HEK293 (cell line): ENCODE measurements at regions of chr19 and their contacts with region 1.

Region 1: DNA sequence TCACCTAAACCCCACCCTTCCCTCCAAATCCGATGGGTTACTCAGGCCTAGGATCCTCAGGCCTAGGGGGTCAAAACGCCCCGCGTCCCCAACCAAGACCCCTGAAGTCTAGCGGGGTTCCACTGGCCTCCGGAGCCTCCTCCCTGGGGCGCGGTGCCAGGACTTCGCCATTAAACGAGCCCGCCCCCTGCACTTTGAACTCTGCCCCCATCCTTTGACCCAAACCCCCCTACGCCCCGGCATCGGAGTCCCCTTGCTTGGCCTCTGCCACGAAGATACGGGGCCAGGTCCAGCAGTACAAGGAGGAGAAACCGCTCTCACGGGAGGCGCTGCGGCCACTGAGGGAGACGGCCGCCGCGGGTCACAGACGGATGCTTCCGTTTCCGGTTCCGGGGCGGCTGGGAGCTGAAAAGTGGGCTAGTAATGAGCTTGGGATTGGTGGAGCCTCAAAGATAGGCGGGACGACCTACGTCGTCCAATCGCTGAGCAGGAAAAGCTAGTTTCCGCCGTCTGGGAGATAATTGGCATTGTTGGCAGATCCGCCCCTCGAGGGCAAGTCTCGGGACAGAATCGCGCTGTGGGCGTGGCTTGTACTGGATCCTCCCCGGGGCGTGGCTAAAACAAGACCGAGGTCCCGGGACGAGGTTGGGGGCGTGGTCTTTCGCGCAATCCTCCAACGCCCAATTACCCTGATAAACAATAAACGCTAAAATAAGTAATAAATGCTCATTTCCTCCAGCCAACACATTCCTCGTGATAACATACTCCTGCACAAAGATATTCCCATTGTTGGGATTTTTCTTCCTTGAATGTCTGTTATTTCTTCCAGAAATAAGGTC is 5.7 kb upstream of the ZNF77 start:
- H3K4me3 ChIP-seq: peak overlapping the region; percentile 82
- H3K27ac ChIP-seq: peak overlapping the region; percentile 70
- H3K4me1 ChIP-seq: peaks cover 4% of the 10 kb centered on the region; the same call in 1 of the 2 replicates
- CTCF ChIP-seq: 0 out of 2 replicates have a peak, but pooled peaks have one; percentile 41

Region 2: DNA sequence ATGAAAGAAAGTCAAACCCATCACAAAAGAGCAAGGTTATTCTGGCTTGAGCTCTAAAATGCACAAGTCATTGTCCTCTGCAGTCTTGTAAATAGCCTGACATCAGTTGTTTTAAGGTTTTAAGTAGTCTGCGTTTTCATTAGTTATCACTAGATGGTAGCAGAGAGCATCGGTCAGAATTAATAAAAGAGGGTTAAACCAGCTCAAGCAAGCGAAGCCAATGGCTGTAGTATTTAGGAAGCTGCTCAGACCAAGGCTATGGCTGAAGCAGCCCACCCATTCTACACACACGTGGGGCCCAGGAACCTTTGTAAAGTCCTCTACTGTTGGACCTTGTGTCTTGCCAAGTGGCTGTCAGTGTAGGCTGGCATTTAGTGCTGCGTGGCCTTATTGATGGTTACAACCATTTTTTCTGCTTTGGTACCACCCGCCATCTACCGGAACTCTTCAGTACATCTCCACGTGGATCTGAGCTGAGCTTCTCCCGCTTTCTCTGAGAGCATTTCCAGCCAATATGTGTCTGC is 63.1 kb before region 1 on chr19:
- CTCF ChIA-PET with region 1: interaction called, 13 read pairs
- POLR2A ChIA-PET with region 1: interaction called, 7 read pairs
- H3K4me3 ChIP-seq: no peak overlapping the region
- H3K27ac ChIP-seq: no peak overlapping the region
- H3K4me1 ChIP-seq: no peaks in the 10 kb centered on the region
- CTCF ChIP-seq: peak; percentile 46; the same call in 1 of the 2 replicates

Region 3: DNA sequence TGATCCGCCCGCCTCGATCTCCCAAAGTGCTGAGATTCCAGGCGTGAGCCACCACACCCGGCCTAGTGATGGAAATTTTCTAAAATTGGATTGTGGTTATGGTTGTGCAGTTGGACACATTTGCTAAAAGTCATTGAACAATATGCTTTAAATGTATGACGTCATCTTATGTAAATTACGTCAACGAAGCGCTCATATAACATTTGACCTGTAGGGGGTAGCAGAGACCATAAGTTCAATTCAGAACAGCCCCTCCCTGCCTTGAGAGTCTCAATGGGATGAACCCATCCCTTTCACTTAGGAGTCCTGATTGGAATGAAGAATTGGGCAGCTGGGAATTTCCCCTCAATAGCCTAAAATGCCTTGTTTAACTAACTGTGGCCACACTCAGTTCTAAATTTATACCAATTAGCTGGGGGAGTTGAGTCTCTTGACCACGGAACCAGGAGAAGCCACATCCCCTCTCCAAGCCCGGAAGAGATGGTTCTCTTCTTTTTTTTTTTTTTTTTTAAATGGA is 11.6 kb after region 1 on chr19:
- CTCF ChIA-PET with region 1: interaction called, 19 read pairs
- POLR2A ChIA-PET with region 1: interaction called, 7 read pairs
- H3K4me3 ChIP-seq: no peak overlapping the region
- H3K27ac ChIP-seq: no peak overlapping the region
- H3K4me1 ChIP-seq: no peaks in the 10 kb centered on the region
- CTCF ChIP-seq: peak; percentile 75

Region 4: GRCh38 chr19:3125900-3126524 is 175.5 kb after region 1 on chr19:
- CTCF ChIA-PET with region 1: interaction called, 17 read pairs
- POLR2A ChIA-PET with region 1: interaction called, 5 read pairs
- H3K4me3 ChIP-seq: no peak overlapping the region
- H3K27ac ChIP-seq: no peak overlapping the region
- H3K4me1 ChIP-seq: no peaks in the 10 kb centered on the region
- CTCF ChIP-seq: peak; percentile 98

Region 5: DNA sequence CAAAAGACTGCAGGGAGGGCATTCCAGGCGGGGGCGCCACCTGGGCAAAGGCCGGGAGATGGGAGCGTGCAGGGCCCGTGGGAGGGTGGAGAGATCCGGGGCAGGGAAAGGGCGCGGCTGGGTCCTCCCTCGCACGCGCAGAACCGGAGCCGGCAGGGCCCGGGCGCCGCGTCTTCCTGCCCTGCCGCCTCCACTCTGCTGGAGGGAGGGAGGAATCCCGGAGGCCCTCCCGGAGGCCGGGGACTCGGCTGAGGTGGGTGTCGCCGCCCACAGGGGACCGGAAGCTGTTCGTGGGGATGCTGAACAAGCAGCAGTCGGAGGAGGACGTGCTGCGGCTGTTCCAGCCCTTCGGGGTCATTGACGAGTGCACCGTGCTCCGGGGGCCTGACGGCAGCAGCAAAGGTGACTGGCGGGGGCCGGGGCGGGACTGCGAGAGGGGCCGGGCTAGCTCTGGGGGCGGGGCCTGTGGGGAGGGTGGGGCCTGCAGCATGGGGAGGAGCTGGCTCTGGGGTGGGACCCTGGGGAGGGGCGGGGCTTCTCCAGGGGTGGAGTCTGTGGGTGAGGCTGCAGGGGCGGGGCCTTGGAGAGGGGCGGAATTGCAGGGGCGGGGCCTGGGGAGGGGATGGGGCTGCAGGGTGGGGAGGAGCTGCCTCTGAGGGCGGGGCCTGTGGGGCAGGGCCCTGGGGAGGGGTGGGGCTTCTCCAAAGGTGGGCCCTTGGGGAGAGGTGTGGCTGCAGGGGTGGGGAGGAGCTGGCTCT is 325.3 kb after region 1 on chr19:
- CTCF ChIA-PET with region 1: no interaction called
- POLR2A ChIA-PET with region 1: interaction called, 16 read pairs
- H3K4me3 ChIP-seq: peak overlapping the region; percentile 55
- H3K27ac ChIP-seq: no peak overlapping the region; the same call in 1 of the 2 replicates
- H3K4me1 ChIP-seq: no peaks in the 10 kb centered on the region
- CTCF ChIP-seq: peak; percentile 98